GM12878 (cell line): ENCODE measurements at regions of chr5 and their contacts with region 1.

Region 1: DNA sequence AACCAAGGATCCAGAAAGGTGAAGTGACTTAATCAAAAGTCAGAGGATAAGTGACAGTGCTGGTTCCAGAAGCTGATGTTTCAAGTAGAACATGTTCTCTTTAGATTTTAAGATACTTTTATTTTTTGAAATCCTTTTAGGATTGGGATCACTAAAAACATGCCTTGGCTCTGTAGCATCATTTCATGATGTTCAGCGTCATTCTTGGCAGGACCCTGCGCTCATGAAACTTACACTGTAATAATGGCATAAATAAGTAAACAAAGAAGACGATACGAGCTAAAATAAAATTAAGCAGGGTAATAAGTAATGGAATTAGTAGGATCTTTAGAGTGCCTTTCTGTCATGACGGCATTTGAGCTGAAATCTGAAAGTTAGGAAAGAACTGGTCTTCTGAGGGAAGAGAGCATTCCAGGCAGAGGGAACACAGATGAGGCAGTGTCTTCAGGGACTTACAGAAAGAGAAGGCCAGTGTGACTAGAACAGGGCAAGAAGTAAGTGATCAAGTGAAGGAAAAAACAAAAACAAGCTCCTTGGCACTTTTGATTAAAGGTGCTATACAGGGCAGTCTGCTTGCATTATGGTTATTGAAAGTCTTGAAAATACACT is 19.9 kb downstream of the CTNNA1 start:
- DNase-seq: no peak
- ATAC-seq: no peak
- H3K4me3 ChIP-seq: no peak overlapping the region
- H3K27ac ChIP-seq: no peak overlapping the region
- H3K4me1 ChIP-seq: no peaks in the 10 kb centered on the region
- H3K27me3 ChIP-seq: no peaks in the 10 kb centered on the region
- CTCF ChIP-seq: no peak
- EP300 ChIP-seq: no peak
- POLR2A ChIP-seq: no peak
- RAD21 ChIP-seq: no peak

Region 2: DNA sequence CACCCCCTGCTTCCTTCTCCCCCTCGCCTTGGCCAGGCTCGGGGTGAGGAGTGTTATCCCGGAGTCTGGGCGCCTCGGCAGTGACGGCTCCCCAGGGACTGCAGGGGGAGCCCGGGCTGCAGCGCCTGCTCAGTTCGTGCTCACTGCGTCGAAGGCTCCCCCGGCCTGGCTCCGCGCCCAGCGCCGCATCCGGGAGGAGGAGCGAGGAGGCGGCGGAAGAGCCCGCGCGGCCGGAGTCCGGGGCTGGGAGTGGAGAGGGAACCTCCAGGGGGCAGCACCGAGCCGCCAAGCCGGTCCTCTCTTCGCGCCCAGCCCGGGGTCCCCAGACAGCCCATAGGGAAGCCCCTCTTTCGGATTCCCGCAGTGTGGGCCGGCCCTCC is 309.1 kb before region 1 on chr5:
- CTCF ChIA-PET with region 1: no interaction called
- POLR2A ChIA-PET with region 1: no interaction called
- RAD21 ChIA-PET with region 1: no interaction called
- SMC1A ChIA-PET with region 1: no interaction called
- in situ Hi-C with region 1: no loop called
- intact Hi-C with region 1: no loop called
- DNase-seq: peak; percentile 76
- ATAC-seq: peak; percentile 71
- H3K4me3 ChIP-seq: peak overlapping the region; percentile 80
- H3K27ac ChIP-seq: peak overlapping the region; percentile 98
- H3K4me1 ChIP-seq: peaks cover 19% of the 10 kb centered on the region
- H3K27me3 ChIP-seq: peaks cover 0 to 6% of the 10 kb centered on the region in 2 experiments; a peak in 1 of 4 replicates
- CTCF ChIP-seq: peak; percentile 79 to 81 (median 80)
- EP300 ChIP-seq: no peak
- POLR2A ChIP-seq: peak; percentile 80
- RAD21 ChIP-seq: peak; percentile 29; the same call in 1 of the 2 replicates

Region 3: GRCh38 chr5:138760448-138761110 is 12.5 kb before region 1 on chr5:
- CTCF ChIA-PET with region 1: interaction called, 5 read pairs
- POLR2A ChIA-PET with region 1: interaction called, 4 read pairs
- RAD21 ChIA-PET with region 1: no interaction called
- SMC1A ChIA-PET with region 1: interaction called, 14 read pairs
- in situ Hi-C with region 1: no loop called
- intact Hi-C with region 1: no loop called
- DNase-seq: no peak
- ATAC-seq: no peak
- H3K4me3 ChIP-seq: no peak overlapping the region
- H3K27ac ChIP-seq: no peak overlapping the region
- H3K4me1 ChIP-seq: peaks cover under 1% of the 10 kb centered on the region
- H3K27me3 ChIP-seq: no peaks in the 10 kb centered on the region
- CTCF ChIP-seq: no peak
- EP300 ChIP-seq: no peak
- POLR2A ChIP-seq: no peak
- RAD21 ChIP-seq: no peak